CD4-positive, alpha-beta memory T cell (primary cell): ENCODE measurements at regions of chr5 and their contacts with region 1.

Region 1: GRCh38 chr5:172958331-172959046 is 735 bp upstream of the RPL26L1 start:
- DNase-seq: peak; percentile 62 to 70 (median 67)
- H3K4me3 ChIP-seq: peak overlapping the region in 1 of 2 donors; percentile 97
- H3K4me3 Mint-ChIP-seq: peak overlapping the region; percentile 86 to 98 (median 96)
- H3K27ac ChIP-seq: peak overlapping the region; percentile 82
- H3K27ac Mint-ChIP-seq: peak overlapping the region; percentile 92 to 99 (median 98)
- H3K4me1 ChIP-seq: peaks cover 16% of the 10 kb centered on the region
- H3K4me1 Mint-ChIP-seq: peaks cover 18 to 43% (median 27%) of the 10 kb centered on the region in 4 donors
- H3K27me3 ChIP-seq: no peaks in the 10 kb centered on the region
- H3K27me3 Mint-ChIP-seq: no peaks in the 10 kb centered on the region

Region 2: DNA sequence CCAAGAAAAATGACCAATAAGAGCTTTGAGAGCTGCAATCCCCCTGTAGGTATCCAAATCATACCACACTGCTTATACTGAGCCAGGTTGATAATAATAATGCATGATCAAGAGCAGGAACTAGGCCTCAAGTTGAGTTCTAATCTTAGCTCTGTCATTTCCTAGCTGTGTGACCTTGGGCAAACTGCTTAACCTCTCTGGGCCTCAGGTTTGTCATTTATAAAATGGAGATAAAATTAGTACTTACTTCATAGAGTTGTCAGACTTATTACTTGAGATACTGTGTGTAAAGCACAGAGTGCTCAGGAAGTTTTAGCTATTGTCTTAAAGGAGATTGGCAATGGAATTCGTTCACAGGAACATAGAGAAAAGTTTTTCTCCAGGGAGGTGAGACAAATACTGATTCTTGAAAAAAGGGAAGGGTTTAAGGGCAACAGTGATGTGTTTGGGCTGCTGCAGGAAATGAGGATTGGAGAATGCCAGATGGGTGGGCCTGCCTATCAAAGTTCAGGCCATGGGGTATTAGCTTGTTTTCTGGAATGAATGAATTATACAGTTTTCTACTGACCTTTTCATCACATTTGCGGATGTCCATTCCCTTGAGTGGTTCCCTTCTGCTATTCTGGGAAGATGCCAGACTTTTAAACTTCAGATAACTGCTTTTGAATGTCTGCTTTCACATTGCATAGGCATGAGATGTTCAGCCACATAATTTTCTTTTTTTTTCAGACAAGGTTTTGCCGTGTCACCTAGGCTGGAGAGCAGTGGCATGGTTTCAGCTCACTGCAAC is 14.8 kb after region 1 on chr5:
- CTCF ChIA-PET with region 1: interaction called, 14 read pairs
- POLR2A ChIA-PET with region 1: interaction called, 8 read pairs
- intact Hi-C with region 1: no loop called
- DNase-seq: no peak
- H3K4me3 ChIP-seq: no peak overlapping the region
- H3K4me3 Mint-ChIP-seq: no peak overlapping the region
- H3K27ac ChIP-seq: no peak overlapping the region
- H3K27ac Mint-ChIP-seq: no peak overlapping the region
- H3K4me1 ChIP-seq: no peaks in the 10 kb centered on the region
- H3K4me1 Mint-ChIP-seq: no peaks in the 10 kb centered on the region
- H3K27me3 ChIP-seq: no peaks in the 10 kb centered on the region
- H3K27me3 Mint-ChIP-seq: peaks cover 0 to 2% of the 10 kb centered on the region in 2 donors

Region 3: DNA sequence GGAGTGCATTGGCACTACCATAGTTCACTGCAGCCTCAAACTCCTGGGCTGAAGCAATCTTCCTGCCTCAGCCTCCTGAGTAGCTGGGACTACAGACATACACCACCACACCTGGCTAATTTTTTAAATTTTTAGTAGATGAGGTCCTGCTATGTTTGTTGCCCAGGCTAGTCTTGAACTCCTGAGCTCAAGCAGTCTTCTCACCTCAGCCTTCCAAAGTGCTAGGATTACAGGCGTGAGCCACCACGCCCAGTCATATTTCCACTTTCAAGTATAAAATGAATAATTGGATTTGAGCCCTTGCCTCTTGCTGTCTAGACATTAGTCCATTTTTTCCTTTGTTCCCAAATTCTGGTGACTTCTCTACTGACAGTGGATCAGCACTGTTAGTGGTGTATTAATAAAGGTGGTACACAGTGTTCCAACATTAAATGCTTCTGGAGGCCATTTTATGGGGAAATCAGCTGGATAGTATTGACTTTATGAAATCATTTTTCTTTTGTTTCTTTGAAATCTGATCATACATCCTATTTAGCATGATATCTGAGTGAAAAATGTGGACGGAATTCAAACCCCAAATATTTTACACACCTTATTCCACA is 41.0 kb after region 1 on chr5:
- CTCF ChIA-PET with region 1: no interaction called
- POLR2A ChIA-PET with region 1: no interaction called
- intact Hi-C with region 1: no loop called
- DNase-seq: no peak
- H3K4me3 ChIP-seq: no peak overlapping the region
- H3K4me3 Mint-ChIP-seq: no peak overlapping the region
- H3K27ac ChIP-seq: no peak overlapping the region
- H3K27ac Mint-ChIP-seq: peak overlapping the region in 5 of 7 donors; percentile 10 to 81 (median 64)
- H3K4me1 ChIP-seq: peaks cover 66% of the 10 kb centered on the region
- H3K4me1 Mint-ChIP-seq: peaks cover 46 to 61% (median 54%) of the 10 kb centered on the region in 4 donors
- H3K27me3 ChIP-seq: no peaks in the 10 kb centered on the region
- H3K27me3 Mint-ChIP-seq: no peaks in the 10 kb centered on the region

Region 4: GRCh38 chr5:173144200-173145176 is 186.0 kb after region 1 on chr5 and contains the start of gene BNIP1:
- CTCF ChIA-PET with region 1: interaction called, 3 read pairs
- POLR2A ChIA-PET with region 1: interaction called, 9 read pairs
- intact Hi-C with region 1: loop called (anchors 1 kb)
- DNase-seq: peak; percentile 95 to 98 (median 95)
- H3K4me3 ChIP-seq: peak within 1 kb of the TSS; percentile 80 to 100
- H3K4me3 Mint-ChIP-seq: peak within 1 kb of the TSS; percentile 97 to 99 (median 98)
- H3K27ac ChIP-seq: peak within 1 kb of the TSS; percentile 94
- H3K27ac Mint-ChIP-seq: peak within 1 kb of the TSS; percentile 99 to 100 (median 99)
- H3K4me1 ChIP-seq: peaks cover 9% of the 10 kb centered on the region
- H3K4me1 Mint-ChIP-seq: peaks cover 8 to 19% (median 11%) of the 10 kb centered on the region in 4 donors
- H3K27me3 ChIP-seq: no peaks in the 10 kb centered on the region
- H3K27me3 Mint-ChIP-seq: no peaks in the 10 kb centered on the region
- total RNA-seq, gene BNIP1: 7.1 to 7.7 TPM